HAP-1 (cell line): ENCODE measurements at regions of chr11 and their contacts with region 1.

Region 1: GRCh38 chr11:16945671-16946469 is 68.3 kb downstream of the PLEKHA7 start:
- DNase-seq: peak; percentile 54 to 71
- H3K4me3 ChIP-seq: no peak overlapping the region
- H3K4me1 ChIP-seq: peaks cover 18% of the 10 kb centered on the region
- H3K27me3 ChIP-seq: no peaks in the 10 kb centered on the region

Region 2: DNA sequence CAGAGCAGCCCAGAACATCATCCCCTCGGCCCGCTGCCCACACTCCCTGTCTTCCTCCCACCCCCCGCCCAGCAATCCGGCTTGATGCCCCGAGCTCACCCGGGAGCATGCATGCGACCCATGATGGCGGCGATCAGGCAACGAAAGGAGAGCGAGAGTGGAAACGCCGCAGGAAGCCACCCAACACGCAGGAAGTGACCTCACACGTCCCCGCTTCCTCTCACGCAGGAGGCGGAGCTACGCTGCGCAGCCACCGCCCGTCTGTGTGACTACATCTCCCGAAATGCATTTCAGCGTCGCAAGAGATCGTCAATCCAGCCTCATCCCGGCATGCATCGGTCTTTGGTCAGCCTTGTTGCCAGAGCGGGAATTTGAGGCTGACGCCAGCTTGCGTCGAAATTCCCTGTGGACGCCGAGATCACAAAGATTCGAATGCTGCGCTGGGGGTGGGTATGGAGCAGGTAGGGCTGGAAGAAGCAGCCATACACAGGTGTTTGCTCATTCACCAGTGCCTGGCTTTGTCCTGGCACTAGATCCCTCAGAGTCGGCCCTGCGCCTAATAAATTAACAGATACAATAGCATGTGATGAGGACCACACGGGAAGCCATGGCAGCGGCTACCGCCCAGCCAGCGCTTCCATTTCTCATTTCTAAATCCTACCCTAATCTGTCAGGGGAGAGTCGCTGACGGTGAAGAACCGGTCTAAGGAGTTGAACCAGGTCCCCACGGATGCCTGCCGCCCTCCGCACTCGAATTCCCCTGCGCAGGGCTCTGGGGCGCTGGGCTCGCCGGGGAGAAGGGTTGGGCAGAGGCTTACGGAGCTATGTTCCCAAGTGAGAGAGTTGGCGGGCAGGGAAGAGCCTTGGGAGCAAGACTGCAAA is 131.9 kb after region 1 on chr11 and contains the start of gene RPS13:
- in situ Hi-C with region 1: loop called (anchors 10 kb)
- DNase-seq: peak; percentile 97 to 99
- H3K4me3 ChIP-seq: peak within 1 kb of the TSS; percentile 100
- H3K4me1 ChIP-seq: peaks cover 20% of the 10 kb centered on the region
- H3K27me3 ChIP-seq: no peaks in the 10 kb centered on the region